ENCODE measurements at regions of chr12 and their contacts with region 1.

Region 1: DNA sequence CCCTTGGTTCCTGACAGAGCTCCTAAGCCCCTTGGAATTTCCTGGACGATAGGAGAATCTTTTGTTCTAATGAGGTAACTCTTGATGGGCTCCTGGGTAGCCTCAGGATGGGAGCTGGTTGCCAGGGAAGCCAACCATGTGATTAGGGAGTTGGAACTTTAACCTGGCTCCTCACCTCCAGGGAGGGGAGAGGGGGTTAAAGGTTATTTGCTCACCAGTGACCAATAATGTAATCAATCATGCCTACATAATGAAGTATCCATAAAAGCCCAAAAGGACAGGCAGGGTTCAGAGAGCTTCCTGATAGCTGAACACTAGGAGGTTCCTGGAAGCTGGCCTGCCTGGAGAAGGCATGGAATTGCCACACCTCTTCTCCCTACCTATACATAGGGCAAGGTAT is 6.2 kb upstream of the CNOT2 start:
- DNase-seq: no peak
- ATAC-seq: no peak
- H3K4me3 ChIP-seq: no peak overlapping the region
- H3K4me3 Mint-ChIP-seq: no peak overlapping the region
- H3K27ac ChIP-seq: no peak overlapping the region
- H3K27ac Mint-ChIP-seq: no peak overlapping the region
- H3K4me1 ChIP-seq: peaks cover 2% of the 10 kb centered on the region
- H3K4me1 Mint-ChIP-seq: peaks cover 27% of the 10 kb centered on the region
- H3K27me3 ChIP-seq: no peaks in the 10 kb centered on the region
- H3K27me3 Mint-ChIP-seq: no peaks in the 10 kb centered on the region
- CTCF ChIP-seq: no peak

Region 2: DNA sequence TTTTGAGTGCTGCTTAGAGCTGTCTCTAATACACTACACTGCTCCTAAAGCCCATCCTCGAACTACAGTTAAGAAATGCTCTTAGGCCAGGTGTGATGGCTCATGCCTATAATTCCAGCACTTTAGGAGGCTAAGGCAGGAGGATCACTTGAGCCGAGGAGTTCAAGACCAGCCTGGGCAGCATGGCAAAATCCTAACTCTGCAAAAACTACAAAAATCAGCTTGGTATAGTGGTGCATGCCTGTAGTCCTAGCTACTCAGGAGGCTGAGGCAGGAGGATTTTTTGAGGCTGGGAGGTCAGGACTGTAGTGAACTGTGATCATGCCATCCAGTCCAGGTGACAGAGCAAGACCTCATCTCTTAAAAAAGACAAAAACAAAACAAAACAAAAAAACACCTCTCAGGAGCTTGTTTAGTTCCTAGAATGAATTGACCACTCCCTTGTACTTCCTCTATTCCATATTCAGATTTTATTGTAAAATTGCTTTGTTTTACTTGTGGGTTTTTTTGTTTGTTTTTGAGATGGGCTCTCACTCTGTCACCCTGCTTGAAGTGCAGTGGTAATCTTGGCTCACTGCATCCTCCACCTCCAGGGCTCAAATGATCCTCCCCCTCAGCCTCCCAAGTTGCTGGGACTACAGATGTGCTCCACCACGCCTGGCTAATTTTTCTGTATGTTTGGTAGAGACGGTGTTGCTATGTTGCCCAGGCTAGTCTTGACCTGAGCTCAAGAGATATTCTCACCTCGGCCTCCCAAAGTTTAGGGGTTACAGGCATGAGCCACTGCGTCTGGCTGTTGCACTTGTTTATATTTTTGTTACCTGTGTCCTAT is 1415.4 kb before region 1 on chr12:
- CTCF ChIA-PET with region 1: no interaction called
- POLR2A ChIA-PET with region 1: no interaction called
- intact Hi-C with region 1: loop called in 1 of 2 experiments (anchors 10 kb)
- DNase-seq: no peak
- ATAC-seq: no peak
- H3K4me3 ChIP-seq: no peak overlapping the region
- H3K4me3 Mint-ChIP-seq: no peak overlapping the region
- H3K27ac ChIP-seq: no peak overlapping the region
- H3K27ac Mint-ChIP-seq: peak overlapping the region; percentile 36
- H3K4me1 ChIP-seq: peaks cover 7% of the 10 kb centered on the region
- H3K4me1 Mint-ChIP-seq: peaks cover 34% of the 10 kb centered on the region
- H3K27me3 ChIP-seq: no peaks in the 10 kb centered on the region
- H3K27me3 Mint-ChIP-seq: no peaks in the 10 kb centered on the region
- CTCF ChIP-seq: no peak

Region 3: DNA sequence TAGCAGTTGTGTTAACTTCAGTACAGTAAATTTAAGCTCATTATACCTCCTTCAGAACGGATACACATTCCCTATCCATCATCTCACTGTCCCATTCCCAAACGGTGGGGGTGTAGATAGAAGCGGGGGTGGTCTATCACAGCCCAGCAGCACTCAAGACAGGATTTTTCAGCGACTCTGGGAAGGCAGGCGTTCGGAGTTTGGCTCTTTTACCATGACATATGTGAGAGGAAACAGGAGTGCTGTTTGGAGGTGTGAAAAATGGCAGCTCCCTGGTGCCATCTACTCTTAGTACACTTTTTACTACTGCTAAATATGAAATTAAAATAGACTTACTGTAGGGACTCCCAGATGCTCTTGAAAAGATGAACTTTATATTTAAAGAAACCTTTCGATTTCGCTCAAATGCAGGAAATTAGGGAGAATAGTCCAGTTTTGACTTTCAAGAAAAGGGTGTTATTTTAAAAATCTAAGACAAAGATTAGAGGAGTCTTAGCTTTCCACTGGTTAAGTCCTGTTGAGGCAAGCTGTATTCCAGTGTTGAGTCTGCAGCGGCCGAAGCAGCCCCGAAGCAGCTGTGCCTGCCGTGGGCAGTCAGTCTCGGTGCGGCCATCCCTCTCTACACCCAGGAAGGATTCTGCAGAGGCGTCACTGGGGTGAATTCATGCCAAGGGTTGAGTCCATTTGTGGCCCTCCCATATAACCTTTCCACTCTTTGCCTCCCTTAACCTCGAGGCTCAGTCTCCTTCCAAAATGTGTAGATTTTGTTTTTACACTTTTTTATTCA is 171.2 kb after region 1 on chr12:
- CTCF ChIA-PET with region 1: no interaction called
- POLR2A ChIA-PET with region 1: no interaction called
- intact Hi-C with region 1: no loop called
- DNase-seq: no peak
- ATAC-seq: no peak
- H3K4me3 ChIP-seq: no peak overlapping the region
- H3K4me3 Mint-ChIP-seq: no peak overlapping the region
- H3K27ac ChIP-seq: no peak overlapping the region
- H3K27ac Mint-ChIP-seq: no peak overlapping the region
- H3K4me1 ChIP-seq: no peaks in the 10 kb centered on the region
- H3K4me1 Mint-ChIP-seq: no peaks in the 10 kb centered on the region
- H3K27me3 ChIP-seq: no peaks in the 10 kb centered on the region
- H3K27me3 Mint-ChIP-seq: no peaks in the 10 kb centered on the region
- CTCF ChIP-seq: no peak